SK-N-SH (cell line): ENCODE measurements at regions of chr16 and their contacts with region 1.

Region 1: GRCh38 chr16:75385507-75386152 is 47.7 kb downstream of the CFDP1 start:
- DNase-seq: peak; percentile 49
- H3K4me3 ChIP-seq: no peak overlapping the region; a peak in 1 of 4 replicates
- H3K27ac ChIP-seq: peak overlapping the region; percentile 19 to 68; a peak in 3 of 4 replicates
- H3K4me1 ChIP-seq: peaks cover 0 to 25% of the 10 kb centered on the region in 2 experiments; a peak in 3 of 4 replicates
- H3K27me3 ChIP-seq: no peaks in the 10 kb centered on the region
- CTCF ChIP-seq: peak; percentile 76
- EP300 ChIP-seq: no peak
- RAD21 ChIP-seq: peak; percentile 81

Region 2: DNA sequence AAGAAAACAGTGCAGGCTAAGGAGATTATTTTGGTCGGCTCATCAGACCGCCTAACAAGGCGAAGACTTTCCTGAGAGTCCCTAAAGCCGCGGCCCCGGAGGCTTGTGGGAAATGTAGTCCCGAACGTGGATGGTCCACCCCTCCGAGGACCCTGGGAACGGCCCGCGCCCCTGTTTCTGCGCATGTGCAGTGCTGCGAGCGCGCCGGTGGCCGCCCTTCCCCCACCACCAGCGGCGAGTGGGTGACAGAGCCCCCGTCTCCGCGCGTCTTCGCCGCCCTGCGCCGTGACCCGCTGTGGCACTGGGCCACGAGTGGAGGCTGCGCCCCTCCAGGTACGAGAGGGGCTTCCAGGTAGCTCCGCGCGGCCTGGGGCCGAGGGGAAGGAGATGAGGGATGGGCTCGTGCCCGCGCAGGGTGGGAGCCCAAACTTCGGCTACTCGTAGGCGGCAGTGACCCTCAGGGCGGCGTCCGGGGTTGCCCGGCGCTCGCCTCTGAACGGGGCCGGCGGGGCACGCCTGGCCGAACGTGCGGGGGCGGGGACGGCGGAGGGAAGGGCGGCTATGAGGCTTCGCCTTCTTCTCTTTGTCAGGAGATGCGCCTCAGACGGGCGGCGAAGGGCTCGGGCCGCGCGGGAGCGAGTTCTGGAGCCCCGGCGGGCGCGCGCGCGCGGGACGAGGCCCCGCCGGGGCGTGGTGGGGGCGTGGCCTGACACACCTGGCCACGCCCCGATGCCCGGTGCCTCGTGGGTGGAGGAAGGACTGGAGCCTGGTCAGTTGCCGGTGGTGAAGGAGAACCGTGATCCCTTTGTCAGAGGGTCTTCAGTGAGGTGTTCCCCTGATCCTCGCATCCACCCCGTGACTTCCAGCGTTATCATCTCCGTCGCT is 237.1 kb before region 1 on chr16 and contains the start of gene ZFP1:
- CTCF ChIA-PET with region 1: no interaction called
- POLR2A ChIA-PET with region 1: no interaction called
- DNase-seq: peak; percentile 96
- H3K4me3 ChIP-seq: peak within 1 kb of the TSS; percentile 83 to 90
- H3K27ac ChIP-seq: peak within 1 kb of the TSS; percentile 91 to 94
- H3K4me1 ChIP-seq: no peaks in the 10 kb centered on the region
- H3K27me3 ChIP-seq: no peaks in the 10 kb centered on the region
- CTCF ChIP-seq: no peak
- EP300 ChIP-seq: 0 out of 4 replicates have a peak, but pooled peaks of 1 of the 2 experiments have one; percentile 5
- RAD21 ChIP-seq: no peak
- polyA plus RNA-seq, gene ZFP1: 3.0 and 3.7 TPM in 2 replicates

Region 3: DNA sequence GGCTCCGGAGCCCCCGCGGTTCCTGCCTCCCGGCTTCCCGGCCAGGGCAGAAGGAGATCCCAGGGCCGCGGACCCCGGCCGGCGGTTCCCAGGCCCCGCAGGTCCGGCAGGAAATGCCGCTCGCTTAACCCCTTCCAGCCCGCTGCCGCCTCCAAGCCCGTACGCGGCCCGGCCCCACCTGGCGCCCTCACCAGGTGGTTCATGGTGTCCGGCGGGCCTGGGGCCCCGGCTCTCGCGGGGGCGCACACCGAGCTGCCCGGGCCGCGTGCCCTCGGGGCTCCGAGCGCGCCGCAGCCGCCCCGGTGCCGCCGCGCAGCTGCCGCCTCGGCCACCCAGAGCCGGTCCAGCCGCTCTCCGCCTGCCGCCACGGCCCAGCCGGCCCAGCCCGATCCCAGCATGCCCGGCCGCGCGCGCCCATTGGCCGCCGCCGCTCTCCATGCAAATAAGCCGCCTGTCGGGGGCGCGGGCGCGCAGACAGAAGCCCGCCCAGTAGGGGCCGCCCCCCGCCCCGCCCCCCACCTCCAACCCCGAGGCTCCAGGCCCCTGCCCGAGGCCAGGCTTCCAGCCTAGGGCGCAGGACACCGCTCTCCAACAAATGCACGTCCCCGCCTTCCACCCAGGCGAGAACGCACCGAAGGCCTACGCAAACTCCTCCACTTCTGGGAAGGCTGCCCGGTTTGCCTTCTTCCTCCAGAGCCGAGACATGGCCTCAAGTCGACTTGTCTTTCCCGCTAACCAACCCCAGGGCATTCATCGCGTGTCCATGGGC is 134.2 kb before region 1 on chr16 and contains the start of gene BCAR1:
- CTCF ChIA-PET with region 1: interaction called, 13 read pairs
- POLR2A ChIA-PET with region 1: no interaction called
- DNase-seq: peak; percentile 97
- H3K4me3 ChIP-seq: peak within 1 kb of the TSS; percentile 77 to 88
- H3K27ac ChIP-seq: peak within 1 kb of the TSS; percentile 86 to 98
- H3K4me1 ChIP-seq: peaks cover 73 to 74% of the 10 kb centered on the region in 2 experiments; a peak in 3 of 4 replicates
- H3K27me3 ChIP-seq: no peaks in the 10 kb centered on the region
- CTCF ChIP-seq: no peak
- EP300 ChIP-seq: no peak
- RAD21 ChIP-seq: no peak
- polyA plus RNA-seq, gene BCAR1: 29.2 and 45.1 TPM in 2 replicates

Region 4: GRCh38 chr16:75402821-75403475 is 17.3 kb after region 1 on chr16:
- CTCF ChIA-PET with region 1: interaction called, 21 read pairs
- POLR2A ChIA-PET with region 1: no interaction called
- DNase-seq: peak; percentile 50
- H3K4me3 ChIP-seq: no peak overlapping the region
- H3K27ac ChIP-seq: peak overlapping the region in 1 of 2 experiments; percentile 98; a peak in 2 of 4 replicates
- H3K4me1 ChIP-seq: peaks cover 3 to 11% of the 10 kb centered on the region in 2 experiments; a peak in 3 of 4 replicates
- H3K27me3 ChIP-seq: no peaks in the 10 kb centered on the region
- CTCF ChIP-seq: peak; percentile 83
- EP300 ChIP-seq: no peak
- RAD21 ChIP-seq: peak; percentile 70